ENCODE measurements at regions of chr17 and their contacts with region 1.

Region 1: GRCh38 chr17:48024937-48025906 is 12.4 kb downstream of the COPZ2 start:
- DNase-seq: peak; percentile 94
- H3K4me3 Mint-ChIP-seq: peak overlapping the region; percentile 86
- H3K27ac Mint-ChIP-seq: peak overlapping the region; percentile 82
- H3K4me1 Mint-ChIP-seq: peaks cover 28% of the 10 kb centered on the region
- H3K27me3 Mint-ChIP-seq: peaks cover 33% of the 10 kb centered on the region

Region 2: GRCh38 chr17:47987240-47987835 is 37.9 kb before region 1 on chr17:
- intact Hi-C with region 1: no loop called
- DNase-seq: no peak
- H3K4me3 Mint-ChIP-seq: no peak overlapping the region
- H3K27ac Mint-ChIP-seq: no peak overlapping the region
- H3K4me1 Mint-ChIP-seq: peaks cover 14% of the 10 kb centered on the region
- H3K27me3 Mint-ChIP-seq: no peaks in the 10 kb centered on the region

Region 3: DNA sequence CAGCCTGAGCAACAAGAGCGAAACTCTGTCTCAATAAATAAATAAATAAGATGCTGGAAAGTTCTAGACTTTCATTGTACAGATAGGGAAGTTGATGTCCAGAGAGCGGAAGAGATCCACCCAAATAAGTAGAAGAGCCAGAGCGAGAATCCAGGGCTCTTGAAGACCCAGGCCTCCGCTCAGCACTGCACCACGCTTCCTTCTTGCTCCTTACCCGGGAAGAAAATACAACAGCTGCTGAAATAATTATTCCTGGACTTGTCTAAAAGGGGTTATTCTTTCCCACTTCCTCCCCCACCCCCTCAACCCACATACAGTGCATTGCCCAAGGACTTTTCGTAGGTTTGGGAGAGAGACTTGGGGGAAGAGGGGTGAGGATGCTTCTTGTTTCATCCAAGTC is 27.6 kb before region 1 on chr17:
- intact Hi-C with region 1: no loop called
- DNase-seq: no peak
- H3K4me3 Mint-ChIP-seq: no peak overlapping the region
- H3K27ac Mint-ChIP-seq: no peak overlapping the region
- H3K4me1 Mint-ChIP-seq: no peaks in the 10 kb centered on the region
- H3K27me3 Mint-ChIP-seq: peaks cover 6% of the 10 kb centered on the region

Region 4: GRCh38 chr17:48047741-48048383 is 22.6 kb after region 1 on chr17 and contains the start of gene NFE2L1:
- intact Hi-C with region 1: loop called (anchors 1 kb)
- DNase-seq: peak; percentile 98
- H3K4me3 Mint-ChIP-seq: peak within 1 kb of the TSS; percentile 95
- H3K27ac Mint-ChIP-seq: peak within 1 kb of the TSS; percentile 99
- H3K4me1 Mint-ChIP-seq: peaks cover 38% of the 10 kb centered on the region
- H3K27me3 Mint-ChIP-seq: no peaks in the 10 kb centered on the region
- total RNA-seq, gene NFE2L1: 66.2 and 71.3 TPM in 2 replicates

Region 5: GRCh38 chr17:48101012-48101720 is 75.9 kb after region 1 on chr17 and contains the start of gene CBX1:
- intact Hi-C with region 1: loop called (anchors 1 kb)
- DNase-seq: peak; percentile 94
- H3K4me3 Mint-ChIP-seq: peak within 1 kb of the TSS; percentile 99
- H3K27ac Mint-ChIP-seq: peak within 1 kb of the TSS; percentile 95
- H3K4me1 Mint-ChIP-seq: peaks cover 35% of the 10 kb centered on the region
- H3K27me3 Mint-ChIP-seq: no peaks in the 10 kb centered on the region
- total RNA-seq, gene CBX1: 64.5 TPM in 2 replicates

Region 6: DNA sequence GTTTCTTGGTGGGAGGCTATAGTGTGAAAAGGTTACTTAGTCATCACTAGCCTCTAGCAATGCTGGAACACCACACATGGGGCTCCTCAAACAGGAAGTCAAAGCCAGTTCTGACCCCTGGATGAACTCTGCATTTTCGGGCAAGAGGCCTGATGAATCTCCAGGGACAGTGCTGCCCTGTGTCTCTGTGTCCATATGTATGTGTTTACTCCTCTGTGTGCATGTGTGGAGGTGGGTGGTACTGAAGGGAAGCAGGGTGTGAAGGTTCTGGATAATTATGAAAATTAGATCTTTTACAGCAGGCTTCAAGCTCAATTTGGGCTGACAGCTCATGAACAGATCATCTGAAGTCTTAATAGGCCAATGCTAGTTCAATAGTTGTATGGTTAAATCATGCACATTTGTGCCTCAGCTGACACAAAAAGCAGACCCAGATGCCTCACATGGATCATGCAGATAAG is 215.9 kb after region 1 on chr17:
- intact Hi-C with region 1: loop called (anchors 10 kb)
- DNase-seq: no peak
- H3K4me3 Mint-ChIP-seq: peak overlapping the region; percentile 27
- H3K27ac Mint-ChIP-seq: peak overlapping the region; percentile 76
- H3K4me1 Mint-ChIP-seq: peaks cover 67% of the 10 kb centered on the region
- H3K27me3 Mint-ChIP-seq: no peaks in the 10 kb centered on the region

Region 7: GRCh38 chr17:48618256-48618897 is 593.2 kb after region 1 on chr17:
- intact Hi-C with region 1: loop called (anchors 1 kb)
- DNase-seq: peak; percentile 77
- H3K4me3 Mint-ChIP-seq: no peak overlapping the region
- H3K27ac Mint-ChIP-seq: peak overlapping the region; percentile 14
- H3K4me1 Mint-ChIP-seq: peaks cover 27% of the 10 kb centered on the region
- H3K27me3 Mint-ChIP-seq: peaks cover 87% of the 10 kb centered on the region

Measured in activated T-helper 2 cell treated with anti-CD3 and anti-CD28 coated beads, Interferon-gamma antibody, Interleukin-2, Interleukin-4, amounts not matched to agents 10 μg/mL and 5 μg/mL and 100 μg/mL, durations not matched to agents 14 hours and 24 hours and 36 hours (primary cell).